PC-3 (cell line): ENCODE measurements at regions of chr1 and their contacts with region 1.

Region 1: DNA sequence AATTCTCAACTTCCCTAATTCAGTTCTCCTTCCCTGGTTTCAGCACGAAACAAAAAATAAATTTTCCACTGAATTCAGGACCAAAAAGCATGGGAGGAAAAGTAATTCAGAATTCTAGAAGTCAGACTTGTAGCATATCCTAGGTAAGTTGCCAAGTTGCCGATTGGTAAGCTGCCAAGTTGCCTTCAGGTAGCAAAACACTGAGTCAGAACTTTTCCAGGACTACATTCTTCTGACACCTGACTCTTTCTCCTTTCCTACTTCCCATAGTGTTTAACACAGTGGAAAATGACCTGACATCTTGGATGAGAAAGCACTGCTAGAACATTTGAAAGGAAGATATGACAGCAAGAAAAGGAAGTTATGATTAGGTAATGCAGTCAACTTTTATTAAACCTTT is 322.8 kb downstream of the SPATA17 start:
- DNase-seq: peak; percentile 100
- ATAC-seq: peak; percentile 89
- H3K4me3 ChIP-seq: peak overlapping the region; percentile 11; the same call in 1 of the 2 replicates
- H3K27ac ChIP-seq: peak overlapping the region; percentile 52
- H3K4me1 ChIP-seq: peaks cover 21% of the 10 kb centered on the region
- H3K27me3 ChIP-seq: no peaks in the 10 kb centered on the region
- CTCF ChIP-seq: no peak

Region 2: GRCh38 chr1:217943361-217943760 is 10.6 kb before region 1 on chr1:
- CTCF ChIA-PET with region 1: no interaction called
- POLR2A ChIA-PET with region 1: no interaction called
- intact Hi-C with region 1: loop called (anchors 1 kb)
- DNase-seq: no peak
- ATAC-seq: no peak
- H3K4me3 ChIP-seq: no peak overlapping the region
- H3K27ac ChIP-seq: no peak overlapping the region
- H3K4me1 ChIP-seq: no peaks in the 10 kb centered on the region; the same call in 1 of the 2 replicates
- H3K27me3 ChIP-seq: 0 out of 2 replicates have a peak, but pooled peaks cover 5% of the 10 kb centered on the region
- CTCF ChIP-seq: no peak

Region 3: DNA sequence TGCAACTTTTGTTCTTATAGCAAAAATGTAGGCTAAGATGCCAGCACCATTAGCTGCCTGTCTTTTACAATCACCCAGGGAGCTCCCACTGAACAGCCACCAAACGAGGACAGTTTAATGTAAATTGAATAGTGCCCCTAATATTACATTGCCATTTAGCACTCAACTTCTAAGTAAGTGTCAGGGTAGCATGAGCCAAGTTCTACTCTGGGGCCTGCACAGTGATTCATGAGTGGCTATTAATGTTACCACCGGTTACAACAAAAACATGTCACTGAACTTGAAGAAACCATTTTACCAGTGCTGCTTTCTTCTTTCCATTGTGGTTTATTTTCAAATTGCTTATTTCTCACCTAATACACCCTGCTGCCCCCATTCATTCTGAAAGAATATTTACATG is 35.6 kb after region 1 on chr1:
- CTCF ChIA-PET with region 1: no interaction called
- POLR2A ChIA-PET with region 1: no interaction called
- intact Hi-C with region 1: no loop called
- DNase-seq: no peak
- ATAC-seq: no peak
- H3K4me3 ChIP-seq: no peak overlapping the region
- H3K27ac ChIP-seq: no peak overlapping the region
- H3K4me1 ChIP-seq: no peaks in the 10 kb centered on the region
- H3K27me3 ChIP-seq: no peaks in the 10 kb centered on the region
- CTCF ChIP-seq: no peak